ENCODE measurements at regions of chr3 and their contacts with region 1.

Region 1: GRCh38 chr3:177150970-177151627 is 46.2 kb downstream of the TBL1XR1 start:
- DNase-seq: peak; percentile 57
- ATAC-seq: peak; percentile 85
- H3K4me3 Mint-ChIP-seq: no peak overlapping the region
- H3K27ac Mint-ChIP-seq: peak overlapping the region; percentile 80
- H3K4me1 Mint-ChIP-seq: peaks cover 63% of the 10 kb centered on the region
- H3K27me3 Mint-ChIP-seq: no peaks in the 10 kb centered on the region
- CTCF ChIP-seq: no peak

Region 2: GRCh38 chr3:177057768-177058167 is 93.3 kb before region 1 on chr3:
- CTCF ChIA-PET with region 1: interaction called, 3 read pairs
- POLR2A ChIA-PET with region 1: interaction called, 4 read pairs
- intact Hi-C with region 1: loop called (anchors 5 kb)
- DNase-seq: peak; percentile 79
- ATAC-seq: peak; percentile 94
- H3K4me3 Mint-ChIP-seq: no peak overlapping the region
- H3K27ac Mint-ChIP-seq: no peak overlapping the region
- H3K4me1 Mint-ChIP-seq: peaks cover 40% of the 10 kb centered on the region
- H3K27me3 Mint-ChIP-seq: no peaks in the 10 kb centered on the region
- CTCF ChIP-seq: no peak

Measured in activated CD8-positive, alpha-beta T cell treated with anti-CD3 and anti-CD28 coated beads for 36 hours (primary cell).